ENCODE measurements at regions of chr2 and their contacts with region 1.

Region 1: GRCh38 chr2:38875576-38876367 is at the starts of genes DHX57 and MORN2:
- DNase-seq: peak; percentile 62 to 87 (median 74)
- ATAC-seq: peak; percentile 92
- H3K4me3 ChIP-seq: peak within 1 kb of the TSS; percentile 91
- H3K4me3 Mint-ChIP-seq: peak within 1 kb of the TSS; percentile 97
- H3K27ac ChIP-seq: peak within 1 kb of the TSS; percentile 32 to 46
- H3K27ac Mint-ChIP-seq: peak within 1 kb of the TSS; percentile 90
- H3K4me1 ChIP-seq: peaks cover 13% of the 10 kb centered on the region
- H3K4me1 Mint-ChIP-seq: peaks cover 26% of the 10 kb centered on the region
- H3K27me3 ChIP-seq: no peaks in the 10 kb centered on the region
- H3K27me3 Mint-ChIP-seq: no peaks in the 10 kb centered on the region
- CTCF ChIP-seq: no peak
- total RNA-seq, gene DHX57: 13.9 to 14.1 TPM
- total RNA-seq, gene MORN2: 2.1 to 2.6 TPM

Region 2: DNA sequence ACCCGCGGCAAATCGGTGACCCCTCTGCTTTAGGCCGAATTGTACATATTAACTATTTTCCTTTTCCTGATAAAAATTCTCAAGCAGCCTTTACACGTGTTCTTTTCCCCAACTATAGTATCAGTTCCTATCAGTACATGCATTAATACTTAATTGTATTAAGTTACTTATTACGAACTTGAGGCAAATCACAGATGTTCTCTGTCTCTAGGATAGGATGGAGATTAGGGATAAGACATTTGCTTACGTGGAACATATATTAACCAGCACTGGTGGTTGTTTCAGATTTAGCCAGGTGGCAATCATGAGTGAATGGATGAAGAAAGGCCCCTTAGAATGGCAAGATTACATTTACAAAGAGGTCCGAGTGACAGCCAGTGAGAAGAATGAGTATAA is 97.1 kb before region 1 on chr2:
- CTCF ChIA-PET with region 1: no interaction called
- POLR2A ChIA-PET with region 1: no interaction called
- intact Hi-C with region 1: loop called in 1 of 2 experiments (anchors 5 kb)
- DNase-seq: no peak
- ATAC-seq: no peak
- H3K4me3 ChIP-seq: peak overlapping the region; percentile 68
- H3K4me3 Mint-ChIP-seq: peak overlapping the region; percentile 90
- H3K27ac ChIP-seq: peak overlapping the region; percentile 71 to 73
- H3K27ac Mint-ChIP-seq: peak overlapping the region; percentile 89
- H3K4me1 ChIP-seq: peaks cover 17% of the 10 kb centered on the region
- H3K4me1 Mint-ChIP-seq: peaks cover 12% of the 10 kb centered on the region
- H3K27me3 ChIP-seq: no peaks in the 10 kb centered on the region
- H3K27me3 Mint-ChIP-seq: peaks cover 19% of the 10 kb centered on the region
- CTCF ChIP-seq: no peak

Measured in CD4-positive, alpha-beta T cell (primary cell).